Activated naive CD8-positive, alpha-beta T cell treated with anti-CD3 and anti-CD28 coated beads, Interleukin-2, amount 10 ng/mL, durations not matched to agents 7 days and 5 days (primary cell): ENCODE measurements at regions of chr9 and their contacts with region 1.

Region 1: GRCh38 chr9:35657546-35658136 is at the start of gene RMRP:
- DNase-seq: peak; percentile 84
- ATAC-seq: peak; percentile 90
- H3K4me3 Mint-ChIP-seq: peak within 1 kb of the TSS; percentile 92
- H3K27ac Mint-ChIP-seq: peak within 1 kb of the TSS; percentile 98
- H3K4me1 Mint-ChIP-seq: peaks cover 57% of the 10 kb centered on the region
- H3K27me3 Mint-ChIP-seq: no peaks in the 10 kb centered on the region
- total RNA-seq, gene RMRP: 10,447 to 10,452 TPM

Region 2: GRCh38 chr9:35675732-35676392 is 18.2 kb after region 1 on chr9:
- POLR2A ChIA-PET with region 1: interaction called, 13 read pairs
- DNase-seq: peak; percentile 64
- ATAC-seq: peak; percentile 73
- H3K4me3 Mint-ChIP-seq: peak overlapping the region; percentile 76
- H3K27ac Mint-ChIP-seq: no peak overlapping the region
- H3K4me1 Mint-ChIP-seq: peaks cover 10% of the 10 kb centered on the region
- H3K27me3 Mint-ChIP-seq: peaks cover 30% of the 10 kb centered on the region

Region 3: GRCh38 chr9:35748858-35749514 is 91.3 kb after region 1 on chr9 and contains the starts of genes GBA2 and RGP1:
- POLR2A ChIA-PET with region 1: interaction called, 16 read pairs
- DNase-seq: peak; percentile 86
- ATAC-seq: peak; percentile 81
- H3K4me3 Mint-ChIP-seq: peak within 1 kb of the TSS; percentile 94
- H3K27ac Mint-ChIP-seq: peak within 1 kb of the TSS; percentile 91
- H3K4me1 Mint-ChIP-seq: peaks cover 32% of the 10 kb centered on the region
- H3K27me3 Mint-ChIP-seq: no peaks in the 10 kb centered on the region
- total RNA-seq, gene GBA2: 60.1 to 62.2 TPM
- total RNA-seq, gene RGP1: 26.9 to 29.1 TPM